Activated B cell treated with CpG ODN at 0.5 μM for 24 hours (primary cell): ENCODE measurements at regions of chr9 and their contacts with region 1.

Region 1: GRCh38 chr9:92728831-92729734 is 35.5 kb downstream of the BICD2 start:
- DNase-seq: peak; percentile 40
- ATAC-seq: peak; percentile 92
- H3K4me3 Mint-ChIP-seq: peak overlapping the region; percentile 75
- H3K27ac Mint-ChIP-seq: peak overlapping the region; percentile 80
- H3K4me1 Mint-ChIP-seq: peaks cover 86% of the 10 kb centered on the region
- H3K27me3 Mint-ChIP-seq: no peaks in the 10 kb centered on the region
- CTCF ChIP-seq: no peak

Region 2: GRCh38 chr9:92525306-92525705 is 203.8 kb before region 1 on chr9:
- CTCF ChIA-PET with region 1: no interaction called
- POLR2A ChIA-PET with region 1: no interaction called
- intact Hi-C with region 1: no loop called
- DNase-seq: no peak
- ATAC-seq: no peak
- H3K4me3 Mint-ChIP-seq: no peak overlapping the region
- H3K27ac Mint-ChIP-seq: no peak overlapping the region
- H3K4me1 Mint-ChIP-seq: no peaks in the 10 kb centered on the region
- H3K27me3 Mint-ChIP-seq: no peaks in the 10 kb centered on the region
- CTCF ChIP-seq: no peak

Region 3: GRCh38 chr9:92716557-92716956 is 12.5 kb before region 1 on chr9:
- CTCF ChIA-PET with region 1: interaction called, 17 read pairs
- POLR2A ChIA-PET with region 1: no interaction called
- intact Hi-C with region 1: no loop called
- DNase-seq: peak; percentile 76
- ATAC-seq: peak; percentile 75
- H3K4me3 Mint-ChIP-seq: no peak overlapping the region
- H3K27ac Mint-ChIP-seq: no peak overlapping the region
- H3K4me1 Mint-ChIP-seq: peaks cover 51% of the 10 kb centered on the region
- H3K27me3 Mint-ChIP-seq: no peaks in the 10 kb centered on the region
- CTCF ChIP-seq: peak; percentile 75

Region 4: GRCh38 chr9:93159601-93160471 is 430.8 kb after region 1 on chr9:
- CTCF ChIA-PET with region 1: no interaction called
- POLR2A ChIA-PET with region 1: no interaction called
- intact Hi-C with region 1: no loop called
- DNase-seq: peak; percentile 70
- ATAC-seq: peak; percentile 98
- H3K4me3 Mint-ChIP-seq: no peak overlapping the region
- H3K27ac Mint-ChIP-seq: no peak overlapping the region
- H3K4me1 Mint-ChIP-seq: peaks cover 7% of the 10 kb centered on the region
- H3K27me3 Mint-ChIP-seq: no peaks in the 10 kb centered on the region
- CTCF ChIP-seq: peak; percentile 88